Activated B cell treated with CpG ODN at 0.5 μM for 24 hours (primary cell): ENCODE measurements at regions of chr19 and their contacts with region 1.

Region 1: DNA sequence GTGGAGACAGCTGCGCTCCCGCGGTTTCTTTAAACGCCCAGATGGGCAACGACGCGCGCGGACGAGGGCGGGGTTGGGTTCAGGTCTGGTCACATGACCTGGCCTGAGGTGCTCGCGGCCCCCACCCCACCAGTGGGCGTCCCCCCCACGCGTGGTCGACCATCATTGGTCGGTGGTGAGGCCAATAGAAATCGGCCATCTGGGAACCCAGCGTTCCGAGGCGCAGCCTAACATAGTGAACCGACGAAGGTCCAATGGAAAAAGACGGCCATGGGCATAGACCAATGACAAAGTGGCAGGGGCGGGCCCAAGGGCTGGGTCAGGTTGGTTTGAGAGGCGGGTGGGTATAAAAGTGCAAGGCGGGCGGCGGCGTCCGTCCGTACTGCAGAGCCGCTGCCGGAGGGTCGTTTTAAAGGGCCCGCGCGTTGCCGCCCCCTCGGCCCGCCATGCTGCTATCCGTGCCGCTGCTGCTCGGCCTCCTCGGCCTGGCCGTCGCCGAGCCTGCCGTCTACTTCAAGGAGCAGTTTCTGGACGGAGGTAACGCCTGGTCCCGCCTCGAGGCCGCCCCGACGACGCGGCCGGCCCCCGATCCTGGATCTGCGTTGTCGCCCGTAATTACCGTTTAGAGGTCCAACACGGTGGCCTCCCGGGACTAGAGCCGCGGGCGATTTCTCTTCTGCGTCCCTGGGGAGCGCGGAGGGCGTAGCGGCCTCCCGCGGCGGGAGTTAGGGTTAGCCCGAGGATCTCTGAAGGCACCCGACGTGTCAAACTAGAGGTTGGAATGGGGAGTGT is at the start of gene CALR:
- DNase-seq: peak; percentile 96
- ATAC-seq: peak; percentile 85
- H3K4me3 Mint-ChIP-seq: peak within 1 kb of the TSS; percentile 99
- H3K27ac Mint-ChIP-seq: peak within 1 kb of the TSS; percentile 95
- H3K4me1 Mint-ChIP-seq: peaks cover 62% of the 10 kb centered on the region
- H3K27me3 Mint-ChIP-seq: no peaks in the 10 kb centered on the region
- CTCF ChIP-seq: no peak
- total RNA-seq, gene CALR: 721 and 802 TPM in 2 replicates

Region 2: GRCh38 chr19:12881172-12881808 is 57.1 kb before region 1 on chr19 and contains the start of gene DNASE2:
- CTCF ChIA-PET with region 1: interaction called, 4 read pairs
- POLR2A ChIA-PET with region 1: interaction called, 21 read pairs
- intact Hi-C with region 1: loop called (anchors 1 kb)
- DNase-seq: peak; percentile 85
- ATAC-seq: peak; percentile 84
- H3K4me3 Mint-ChIP-seq: peak within 1 kb of the TSS; percentile 92
- H3K27ac Mint-ChIP-seq: peak within 1 kb of the TSS; percentile 94
- H3K4me1 Mint-ChIP-seq: peaks cover 34% of the 10 kb centered on the region
- H3K27me3 Mint-ChIP-seq: no peaks in the 10 kb centered on the region
- CTCF ChIP-seq: no peak
- total RNA-seq, gene DNASE2: 26.5 and 27.2 TPM in 2 replicates

Region 3: GRCh38 chr19:12918271-12918670 is 20.2 kb before region 1 on chr19:
- CTCF ChIA-PET with region 1: no interaction called
- POLR2A ChIA-PET with region 1: interaction called, 46 read pairs
- intact Hi-C with region 1: loop called (anchors 1 kb)
- DNase-seq: no peak
- ATAC-seq: no peak
- H3K4me3 Mint-ChIP-seq: no peak overlapping the region
- H3K27ac Mint-ChIP-seq: no peak overlapping the region
- H3K4me1 Mint-ChIP-seq: peaks cover 21% of the 10 kb centered on the region
- H3K27me3 Mint-ChIP-seq: no peaks in the 10 kb centered on the region
- CTCF ChIP-seq: no peak

Region 4: DNA sequence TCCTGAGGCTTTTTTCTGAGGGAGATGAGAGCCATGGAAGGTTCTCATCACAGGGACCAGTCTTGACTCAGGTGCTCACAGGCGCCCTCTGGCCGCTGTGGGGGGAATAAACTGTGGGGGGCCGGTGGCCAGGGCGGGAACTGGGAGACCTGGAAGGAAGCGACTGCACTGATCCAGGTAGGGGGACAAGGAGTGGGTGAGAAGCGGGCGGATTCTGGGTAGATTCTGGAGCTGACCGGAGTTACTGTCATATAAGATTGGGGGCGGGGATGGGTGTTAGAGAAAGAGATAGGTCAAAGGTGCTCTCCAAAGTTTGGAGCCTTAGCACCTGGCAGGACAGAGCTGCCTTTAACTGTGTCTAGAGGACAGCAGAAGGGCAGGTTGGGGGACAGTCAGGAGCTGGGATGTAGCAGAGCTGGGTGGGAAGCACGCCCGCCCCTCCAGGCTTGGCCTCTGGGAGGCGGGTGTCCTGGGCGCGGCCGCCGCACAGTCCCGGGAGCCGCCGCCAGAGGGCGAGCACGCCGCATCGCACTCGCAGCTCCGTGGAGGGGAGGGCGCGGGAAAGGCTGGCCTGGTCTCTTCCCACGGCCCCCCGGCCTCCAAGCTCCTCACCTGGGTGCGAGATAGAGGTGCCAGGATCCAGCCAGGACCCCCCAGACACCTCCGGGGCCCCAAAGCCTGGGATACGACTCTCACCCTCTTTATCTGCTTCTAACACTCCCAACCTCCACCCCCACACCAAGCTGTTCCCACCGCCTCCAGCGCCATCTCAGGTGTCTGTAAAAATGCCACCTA is 26.8 kb after region 1 on chr19:
- CTCF ChIA-PET with region 1: interaction called, 5 read pairs
- POLR2A ChIA-PET with region 1: interaction called, 11 read pairs
- intact Hi-C with region 1: loop called (anchors 2 kb)
- DNase-seq: peak; percentile 91
- ATAC-seq: peak; percentile 97
- H3K4me3 Mint-ChIP-seq: peak overlapping the region; percentile 87
- H3K27ac Mint-ChIP-seq: peak overlapping the region; percentile 69
- H3K4me1 Mint-ChIP-seq: peaks cover 7% of the 10 kb centered on the region
- H3K27me3 Mint-ChIP-seq: no peaks in the 10 kb centered on the region
- CTCF ChIP-seq: no peak